ENCODE measurements at regions of chr4 and their contacts with region 1.

Region 1: GRCh38 chr4:147866532-147867271 is 134.8 kb downstream of the ARHGAP10 start:
- DNase-seq: peak; percentile 87
- H3K4me3 ChIP-seq: no peak overlapping the region
- H3K27ac ChIP-seq: no peak overlapping the region
- H3K4me1 ChIP-seq: no peaks in the 10 kb centered on the region
- CTCF ChIP-seq: peak; percentile 100

Region 2: GRCh38 chr4:147518846-147519767 is 347.6 kb before region 1 on chr4:
- CTCF ChIA-PET with region 1: no interaction called
- POLR2A ChIA-PET with region 1: interaction called, 3 read pairs
- intact Hi-C with region 1: loop called (anchors 5 kb)
- DNase-seq: peak; percentile 59
- H3K4me3 ChIP-seq: no peak overlapping the region
- H3K27ac ChIP-seq: no peak overlapping the region
- H3K4me1 ChIP-seq: no peaks in the 10 kb centered on the region
- CTCF ChIP-seq: peak; percentile 92

Region 3: GRCh38 chr4:147590249-147590920 is 276.3 kb before region 1 on chr4:
- CTCF ChIA-PET with region 1: no interaction called
- POLR2A ChIA-PET with region 1: no interaction called
- intact Hi-C with region 1: loop called (anchors 5 kb)
- DNase-seq: peak; percentile 45
- H3K4me3 ChIP-seq: no peak overlapping the region
- H3K27ac ChIP-seq: no peak overlapping the region
- H3K4me1 ChIP-seq: no peaks in the 10 kb centered on the region
- CTCF ChIP-seq: peak; percentile 88

Region 4: DNA sequence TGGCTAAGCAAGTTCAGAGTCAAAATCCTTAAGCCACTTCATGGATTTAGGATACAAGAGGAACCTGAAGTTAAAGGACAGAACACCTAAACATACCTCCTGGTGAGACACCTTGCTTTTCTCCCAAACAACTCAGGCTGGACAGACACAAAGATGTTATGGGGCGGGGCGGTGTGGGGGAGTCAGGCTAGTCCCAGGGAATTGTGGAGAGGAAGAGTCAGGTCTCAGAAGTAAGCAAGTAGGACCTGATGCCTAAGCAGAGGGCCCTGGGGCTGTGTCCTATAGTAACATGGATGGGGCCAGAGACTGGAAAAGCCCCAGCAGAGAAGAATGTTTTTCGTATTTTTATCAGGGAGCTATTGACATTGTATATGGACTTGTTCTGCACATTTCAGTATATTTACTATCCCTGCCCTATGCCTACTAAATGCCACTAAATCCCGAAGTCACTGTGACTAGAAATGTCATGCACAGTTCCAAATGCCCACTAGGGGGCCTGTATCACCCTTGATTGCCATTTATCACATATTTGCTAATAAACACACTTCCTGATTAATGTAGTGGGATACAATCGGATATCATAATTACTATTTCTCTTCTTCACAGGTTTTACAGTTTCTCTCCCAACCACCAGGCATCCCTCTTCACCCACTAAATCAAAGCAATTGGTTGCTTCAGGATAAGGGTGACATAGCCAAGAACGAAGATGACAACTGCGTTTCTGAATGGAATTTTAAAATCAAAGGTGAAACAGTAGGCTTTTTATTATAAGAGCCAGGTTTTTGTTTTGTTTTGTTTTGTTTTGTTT is 158.6 kb before region 1 on chr4:
- CTCF ChIA-PET with region 1: interaction called, 7 read pairs
- POLR2A ChIA-PET with region 1: no interaction called
- intact Hi-C with region 1: loop called (anchors 1 kb)
- DNase-seq: peak; percentile 48
- H3K4me3 ChIP-seq: no peak overlapping the region
- H3K27ac ChIP-seq: no peak overlapping the region
- H3K4me1 ChIP-seq: no peaks in the 10 kb centered on the region
- CTCF ChIP-seq: peak; percentile 97

Region 5: GRCh38 chr4:147825451-147826287 is 41.0 kb before region 1 on chr4:
- CTCF ChIA-PET with region 1: no interaction called
- POLR2A ChIA-PET with region 1: no interaction called
- intact Hi-C with region 1: loop called (anchors 5 kb)
- DNase-seq: no peak
- H3K4me3 ChIP-seq: no peak overlapping the region
- H3K27ac ChIP-seq: no peak overlapping the region
- H3K4me1 ChIP-seq: no peaks in the 10 kb centered on the region
- CTCF ChIP-seq: no peak

Region 6: GRCh38 chr4:147891476-147892115 is 24.9 kb after region 1 on chr4:
- CTCF ChIA-PET with region 1: no interaction called
- POLR2A ChIA-PET with region 1: no interaction called
- intact Hi-C with region 1: no loop called
- DNase-seq: no peak
- H3K4me3 ChIP-seq: no peak overlapping the region
- H3K27ac ChIP-seq: no peak overlapping the region
- H3K4me1 ChIP-seq: no peaks in the 10 kb centered on the region
- CTCF ChIP-seq: no peak

Region 7: DNA sequence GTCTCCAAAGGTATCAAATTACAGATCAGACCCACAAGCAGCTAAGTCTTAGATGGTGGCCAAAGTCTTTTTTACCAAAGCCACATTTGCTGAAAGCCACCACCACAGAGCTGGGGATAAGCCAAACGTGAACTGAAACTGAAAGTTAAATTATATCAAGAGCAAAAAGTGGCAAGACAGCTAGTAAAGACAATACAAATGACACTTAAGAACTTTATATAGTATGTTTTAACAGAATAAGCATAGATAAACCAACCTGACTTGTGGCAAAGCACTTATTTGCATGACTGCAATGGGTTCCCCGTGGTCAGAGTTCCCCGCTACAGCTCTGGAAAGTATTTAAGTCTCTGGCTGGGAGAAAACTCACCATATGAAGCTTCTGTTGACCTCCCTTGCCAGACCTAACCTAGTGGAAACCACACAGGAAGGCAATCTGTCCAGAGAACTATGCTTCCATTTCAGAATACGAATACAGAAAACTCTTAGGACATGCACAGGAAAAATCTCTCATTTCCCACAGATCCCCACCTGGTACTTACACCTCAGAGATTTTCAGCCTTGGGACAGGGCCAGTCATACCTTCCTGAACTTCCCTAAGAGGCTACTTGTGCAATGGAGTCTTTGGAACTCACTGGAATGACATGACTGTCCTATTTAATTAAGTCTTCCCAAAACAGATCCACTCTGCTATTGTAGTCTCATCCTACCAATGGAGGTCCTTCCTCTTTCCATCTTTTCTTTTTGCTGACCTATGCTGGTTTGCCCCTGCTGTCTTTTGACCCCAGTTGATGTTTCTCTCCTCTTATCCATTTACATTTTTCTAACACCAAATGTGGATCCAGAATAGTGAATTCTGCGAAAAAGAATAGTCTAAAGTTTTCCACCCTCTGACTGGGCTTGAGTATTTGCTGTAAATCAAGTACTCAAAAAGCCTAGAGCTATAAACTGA is 350.4 kb after region 1 on chr4:
- CTCF ChIA-PET with region 1: no interaction called
- POLR2A ChIA-PET with region 1: no interaction called
- intact Hi-C with region 1: no loop called
- DNase-seq: peak; percentile 23
- H3K4me3 ChIP-seq: peak overlapping the region; percentile 36
- H3K27ac ChIP-seq: no peak overlapping the region
- H3K4me1 ChIP-seq: peaks cover 8% of the 10 kb centered on the region
- CTCF ChIP-seq: no peak

Measured in OCI-LY7 (cell line).